GM23248 (cell line): ENCODE measurements at regions of chr9 and their contacts with region 1.

Region 1: DNA sequence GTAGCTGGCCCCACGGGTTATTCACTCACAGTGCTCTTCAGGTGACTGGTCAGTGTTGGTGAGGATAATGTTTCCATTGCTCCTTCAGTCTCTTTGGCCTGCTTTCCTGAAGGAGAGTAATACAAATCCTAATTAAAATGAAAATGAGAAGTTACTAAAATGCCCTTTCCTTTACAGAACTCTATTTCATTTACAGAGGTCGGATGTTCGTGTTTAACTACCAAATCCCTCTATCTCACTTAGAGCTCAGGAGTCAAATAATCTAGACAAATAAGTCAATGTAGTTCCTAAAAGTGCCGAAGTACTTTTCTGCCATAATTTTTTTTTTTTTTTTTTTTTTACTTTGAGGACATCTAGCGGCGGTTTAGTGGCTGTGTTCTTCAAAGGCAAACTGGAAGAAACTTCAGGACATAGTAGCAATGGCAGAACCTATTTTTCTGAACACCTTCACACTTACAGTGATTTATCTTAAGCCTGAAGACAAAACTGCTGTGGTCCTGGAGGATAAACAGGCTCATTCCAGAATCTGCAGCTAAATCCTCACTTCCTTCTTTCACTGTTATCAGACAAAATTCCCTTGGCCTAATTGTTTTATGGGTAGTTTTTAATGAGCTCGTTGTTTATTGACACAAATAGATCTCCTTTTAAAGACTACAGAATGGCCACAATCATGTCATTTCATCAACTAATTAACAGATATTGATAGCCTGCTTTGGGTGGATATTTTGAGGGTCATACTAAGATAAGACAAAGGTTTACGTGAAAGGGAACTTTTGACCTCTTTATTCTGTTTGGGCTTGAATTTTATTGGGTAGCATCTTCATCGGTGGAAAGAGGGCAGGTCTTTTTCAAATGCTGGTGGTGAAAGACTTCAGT is 207.6 kb upstream of the DMRTA1 start:
- DNase-seq: peak; percentile 77
- H3K4me3 ChIP-seq: no peak overlapping the region
- H3K27ac ChIP-seq: no peak overlapping the region
- H3K4me1 ChIP-seq: peaks cover 24% of the 10 kb centered on the region
- H3K27me3 ChIP-seq: no peaks in the 10 kb centered on the region

Region 2: DNA sequence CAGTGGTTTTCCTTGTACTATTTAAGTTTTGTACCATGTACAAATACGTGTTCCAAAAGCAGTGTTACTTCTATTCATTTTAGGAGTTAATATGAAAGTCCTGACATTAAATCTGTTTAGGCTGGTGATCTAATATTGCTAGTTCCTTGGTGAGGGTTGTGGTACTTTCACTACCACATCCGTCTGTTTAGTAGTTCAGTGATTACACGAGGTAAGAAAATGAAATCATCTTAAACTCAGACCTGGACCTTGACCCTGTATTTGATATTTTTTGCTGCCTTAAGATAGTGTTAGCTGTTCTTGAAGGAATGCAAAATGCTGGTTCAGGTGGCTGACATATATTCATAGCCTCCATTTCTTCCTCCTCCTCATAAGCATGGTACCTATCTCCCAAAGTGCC is 386.3 kb before region 1 on chr9:
- in situ Hi-C with region 1: no loop called
- DNase-seq: no peak
- H3K4me3 ChIP-seq: no peak overlapping the region
- H3K27ac ChIP-seq: no peak overlapping the region
- H3K4me1 ChIP-seq: peaks cover 36% of the 10 kb centered on the region
- H3K27me3 ChIP-seq: no peaks in the 10 kb centered on the region

Region 3: DNA sequence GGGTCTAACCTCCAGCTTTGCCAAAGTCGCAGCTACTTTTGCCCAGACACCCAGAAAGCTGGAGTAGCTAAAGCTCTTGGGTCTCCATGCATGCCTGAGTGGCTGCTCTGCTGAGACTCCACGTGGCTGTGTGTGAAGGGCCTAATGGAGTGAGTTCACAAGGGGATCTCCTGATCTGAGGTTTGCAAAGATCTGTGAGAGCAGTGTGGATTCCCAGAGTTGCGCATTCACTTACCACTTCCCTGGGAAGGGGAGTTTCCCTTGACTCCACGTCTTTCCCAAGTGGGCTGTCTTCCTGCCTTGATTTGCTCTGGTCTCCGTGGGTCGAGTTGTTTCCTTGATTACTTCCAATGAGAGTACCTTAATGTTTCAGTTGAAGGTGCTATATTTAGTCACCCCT is 212.4 kb before region 1 on chr9:
- in situ Hi-C with region 1: loop called (anchors 10 kb)
- DNase-seq: no peak
- H3K4me3 ChIP-seq: no peak overlapping the region
- H3K27ac ChIP-seq: no peak overlapping the region
- H3K4me1 ChIP-seq: peaks cover 13% of the 10 kb centered on the region
- H3K27me3 ChIP-seq: no peaks in the 10 kb centered on the region

Region 4: DNA sequence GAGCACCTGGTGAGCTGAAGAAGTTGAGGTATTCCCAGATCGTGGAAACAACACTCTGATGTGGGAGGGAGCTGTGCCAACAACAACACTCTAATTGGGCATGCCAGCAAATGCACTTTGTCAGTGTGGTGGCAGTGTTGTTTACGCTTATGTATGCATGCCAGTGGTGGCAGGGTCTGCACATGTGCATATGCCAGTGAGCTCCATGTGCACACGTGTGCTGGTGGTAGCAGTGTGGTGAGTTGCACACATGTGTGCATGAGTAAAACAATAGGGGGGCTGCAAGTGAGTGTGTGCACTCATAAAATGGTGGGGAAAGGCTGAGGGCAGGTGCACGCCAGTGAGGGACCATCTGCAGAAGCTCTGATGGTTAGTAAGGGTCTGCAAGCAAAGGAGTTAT is 341.7 kb after region 1 on chr9:
- in situ Hi-C with region 1: no loop called
- DNase-seq: no peak
- H3K4me3 ChIP-seq: no peak overlapping the region
- H3K27ac ChIP-seq: no peak overlapping the region
- H3K4me1 ChIP-seq: no peaks in the 10 kb centered on the region
- H3K27me3 ChIP-seq: no peaks in the 10 kb centered on the region